WTC11 (cell line): ENCODE measurements at regions of chr14 and their contacts with region 1.

Region 1: GRCh38 chr14:22766456-22767322 is at the start of gene OXA1L:
- DNase-seq: peak; percentile 91
- ATAC-seq: peak; percentile 89
- H3K4me3 Mint-ChIP-seq: peak within 1 kb of the TSS; percentile 93
- H3K27ac Mint-ChIP-seq: peak within 1 kb of the TSS; percentile 97
- H3K4me1 Mint-ChIP-seq: peaks cover 26% of the 10 kb centered on the region
- H3K27me3 Mint-ChIP-seq: no peaks in the 10 kb centered on the region
- CTCF ChIP-seq: no peak
- total RNA-seq, gene OXA1L: 133 to 138 TPM (median 135 TPM) in 3 replicates

Region 2: DNA sequence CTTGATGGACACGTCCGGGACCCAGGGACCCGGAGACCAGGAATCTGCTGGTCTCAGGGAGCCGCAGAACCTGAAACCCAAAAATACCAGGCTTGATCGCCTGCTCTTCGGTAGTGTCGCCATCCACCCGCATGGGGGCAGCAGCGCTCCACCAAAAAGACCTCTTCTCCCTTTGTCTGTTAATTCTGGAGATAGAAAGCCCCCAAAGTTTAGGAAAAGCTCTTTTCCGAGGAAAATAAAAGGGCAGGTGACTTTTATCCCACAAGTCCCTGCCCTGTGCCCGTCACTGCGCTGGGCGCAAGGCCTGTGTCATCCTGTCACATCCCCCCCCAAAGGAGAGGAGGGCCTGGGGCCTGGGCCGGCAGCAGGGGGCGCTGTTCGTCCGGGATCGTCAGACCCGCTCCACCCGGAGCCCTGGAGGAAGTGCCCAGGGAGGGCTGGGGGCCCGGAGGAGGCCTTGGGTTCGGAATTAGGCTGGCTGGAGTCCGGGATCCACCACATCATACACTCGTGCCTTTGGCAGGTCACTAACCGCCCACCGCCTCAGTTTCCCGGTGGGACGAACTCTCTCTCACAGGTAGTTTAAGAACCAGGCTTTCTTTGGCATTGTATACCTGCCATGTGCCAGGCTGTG is 209.6 kb before region 1 on chr14:
- CTCF ChIA-PET with region 1: interaction called, 15 read pairs
- POLR2A ChIA-PET with region 1: no interaction called
- DNase-seq: peak; percentile 94
- ATAC-seq: peak; percentile 78
- H3K4me3 Mint-ChIP-seq: peak overlapping the region; percentile 53
- H3K27ac Mint-ChIP-seq: 0 out of 2 replicates have a peak overlapping the region, but pooled peaks have one; percentile 49
- H3K4me1 Mint-ChIP-seq: peaks cover 46% of the 10 kb centered on the region
- H3K27me3 Mint-ChIP-seq: no peaks in the 10 kb centered on the region
- CTCF ChIP-seq: peak; percentile 100

Region 3: GRCh38 chr14:22737052-22737451 is 29.6 kb before region 1 on chr14:
- CTCF ChIA-PET with region 1: no interaction called
- POLR2A ChIA-PET with region 1: no interaction called
- DNase-seq: no peak
- ATAC-seq: no peak
- H3K4me3 Mint-ChIP-seq: no peak overlapping the region
- H3K27ac Mint-ChIP-seq: no peak overlapping the region
- H3K4me1 Mint-ChIP-seq: no peaks in the 10 kb centered on the region
- H3K27me3 Mint-ChIP-seq: peaks cover 3% of the 10 kb centered on the region; the same call in 1 of the 2 replicates
- CTCF ChIP-seq: no peak

Region 4: DNA sequence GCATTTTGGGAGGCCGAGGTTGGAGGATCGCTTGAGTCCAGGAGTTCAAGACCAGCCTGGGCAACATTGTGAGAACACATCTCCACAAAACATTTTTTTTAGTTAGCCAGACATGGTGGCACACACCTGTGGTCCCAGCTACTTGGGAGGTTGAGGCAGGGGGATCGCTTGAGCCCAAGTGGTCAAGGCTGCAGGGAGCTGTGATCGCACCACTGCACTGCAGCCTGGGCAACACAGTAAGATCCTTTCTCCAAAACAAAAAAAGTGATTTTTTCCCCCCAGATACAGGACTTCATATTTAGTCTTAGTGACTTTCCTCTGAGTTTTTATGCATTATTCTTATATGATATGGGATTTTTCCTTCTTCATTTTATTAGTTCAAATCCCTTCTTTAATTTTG is 20.0 kb after region 1 on chr14:
- CTCF ChIA-PET with region 1: no interaction called
- POLR2A ChIA-PET with region 1: no interaction called
- DNase-seq: no peak
- ATAC-seq: no peak
- H3K4me3 Mint-ChIP-seq: no peak overlapping the region
- H3K27ac Mint-ChIP-seq: no peak overlapping the region
- H3K4me1 Mint-ChIP-seq: no peaks in the 10 kb centered on the region
- H3K27me3 Mint-ChIP-seq: no peaks in the 10 kb centered on the region
- CTCF ChIP-seq: no peak

Region 5: DNA sequence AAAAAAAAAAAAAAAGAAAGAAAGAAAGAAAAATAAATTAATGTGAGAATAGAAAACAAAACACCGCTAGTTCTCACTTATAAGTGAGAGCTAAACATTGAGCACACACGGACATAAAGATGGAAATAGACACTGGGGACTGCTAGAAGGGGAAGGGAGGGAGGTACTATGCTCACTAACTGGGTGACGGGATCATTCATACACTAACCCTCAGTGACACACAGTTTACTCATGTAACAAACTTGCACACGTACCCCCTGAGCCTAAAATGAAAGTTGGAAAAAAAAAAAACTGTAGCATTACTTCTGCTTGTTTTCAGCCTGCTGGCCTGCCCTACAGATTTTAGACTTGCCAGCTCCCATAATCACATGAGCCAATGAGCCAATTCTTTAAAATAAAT is 173.0 kb after region 1 on chr14:
- CTCF ChIA-PET with region 1: no interaction called
- POLR2A ChIA-PET with region 1: interaction called, 10 read pairs
- DNase-seq: no peak
- ATAC-seq: no peak
- H3K4me3 Mint-ChIP-seq: no peak overlapping the region
- H3K27ac Mint-ChIP-seq: no peak overlapping the region; the same call in 1 of the 2 replicates
- H3K4me1 Mint-ChIP-seq: 0 out of 2 replicates have a peak, but pooled peaks cover 2% of the 10 kb centered on the region
- H3K27me3 Mint-ChIP-seq: no peaks in the 10 kb centered on the region
- CTCF ChIP-seq: no peak